GM12878 (cell line): ENCODE measurements at regions of chr2 and their contacts with region 1.

Region 1: DNA sequence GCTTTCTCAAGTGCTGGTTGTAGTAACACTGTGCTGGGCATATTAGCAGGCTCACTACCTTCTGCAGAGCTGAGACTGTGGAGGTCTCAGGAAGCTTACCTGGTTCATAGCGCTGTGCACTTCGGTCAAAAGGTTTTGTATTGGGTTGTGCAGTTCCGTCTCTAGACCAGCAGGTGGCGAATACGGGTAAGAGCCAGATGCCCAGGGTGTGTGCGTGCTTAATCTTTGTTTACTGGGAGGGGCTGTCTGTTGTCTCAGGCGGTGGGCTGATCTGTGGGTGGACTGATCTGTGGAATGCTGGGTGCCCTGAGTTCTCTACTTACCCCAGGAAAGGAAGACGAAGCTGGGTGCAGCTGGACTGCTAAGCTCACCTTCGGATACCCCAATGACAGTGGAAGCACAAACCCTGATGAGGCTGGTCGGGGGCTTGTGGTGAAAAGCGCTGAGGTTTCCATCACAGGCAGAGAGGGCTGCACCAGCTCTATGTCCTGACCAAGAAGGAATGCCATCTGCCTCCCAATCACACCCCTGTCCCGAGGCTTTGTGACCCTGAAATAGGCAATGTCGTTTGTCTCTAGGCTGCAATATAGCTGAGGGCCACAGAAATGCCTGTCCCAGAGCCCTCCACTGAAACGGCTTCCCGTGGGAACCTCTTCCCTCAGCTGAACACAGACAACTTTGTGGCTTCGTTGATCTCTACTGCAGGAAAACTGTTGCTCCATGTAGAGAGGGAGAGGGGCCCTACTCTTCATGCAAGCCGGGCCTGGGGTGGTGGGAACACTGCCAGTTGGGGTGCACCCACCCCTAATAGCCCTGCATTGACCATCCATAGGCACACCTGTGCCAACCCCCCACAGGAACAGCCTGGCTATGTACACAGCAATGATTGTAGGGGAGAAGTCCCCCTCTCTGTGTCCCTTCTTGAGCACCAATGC is 45.9 kb upstream of the FAM117B start:
- DNase-seq: peak; percentile 35
- ATAC-seq: peak; percentile 99
- H3K4me3 ChIP-seq: no peak overlapping the region
- H3K27ac ChIP-seq: no peak overlapping the region
- H3K4me1 ChIP-seq: peaks cover 3% of the 10 kb centered on the region
- H3K27me3 ChIP-seq: no peaks in the 10 kb centered on the region
- CTCF ChIP-seq: peak; percentile 90 to 92 (median 90)
- EP300 ChIP-seq: peak in 1 of 2 experiments; percentile 29; a peak in 1 of 4 replicates
- POLR2A ChIP-seq: no peak
- RAD21 ChIP-seq: peak; percentile 94

Region 2: GRCh38 chr2:202479090-202479489 is 109.8 kb before region 1 on chr2:
- CTCF ChIA-PET with region 1: no interaction called
- POLR2A ChIA-PET with region 1: no interaction called
- RAD21 ChIA-PET with region 1: no interaction called
- SMC1A ChIA-PET with region 1: no interaction called
- in situ Hi-C with region 1: no loop called
- intact Hi-C with region 1: no loop called
- DNase-seq: no peak
- ATAC-seq: peak; percentile 46; the same call in 2 of the 3 replicates
- H3K4me3 ChIP-seq: no peak overlapping the region
- H3K27ac ChIP-seq: no peak overlapping the region
- H3K4me1 ChIP-seq: no peaks in the 10 kb centered on the region
- H3K27me3 ChIP-seq: no peaks in the 10 kb centered on the region
- CTCF ChIP-seq: no peak
- EP300 ChIP-seq: no peak
- POLR2A ChIP-seq: no peak
- RAD21 ChIP-seq: no peak

Region 3: GRCh38 chr2:202602285-202602684 is 13.4 kb after region 1 on chr2:
- CTCF ChIA-PET with region 1: interaction called, 49 read pairs
- POLR2A ChIA-PET with region 1: interaction called, 4 read pairs
- RAD21 ChIA-PET with region 1: interaction called, 9 read pairs
- SMC1A ChIA-PET with region 1: interaction called, 16 read pairs
- in situ Hi-C with region 1: no loop called
- intact Hi-C with region 1: no loop called
- DNase-seq: no peak
- ATAC-seq: no peak
- H3K4me3 ChIP-seq: no peak overlapping the region
- H3K27ac ChIP-seq: no peak overlapping the region
- H3K4me1 ChIP-seq: peaks cover 9% of the 10 kb centered on the region
- H3K27me3 ChIP-seq: no peaks in the 10 kb centered on the region
- CTCF ChIP-seq: no peak
- EP300 ChIP-seq: no peak
- POLR2A ChIP-seq: no peak
- RAD21 ChIP-seq: no peak

Region 4: DNA sequence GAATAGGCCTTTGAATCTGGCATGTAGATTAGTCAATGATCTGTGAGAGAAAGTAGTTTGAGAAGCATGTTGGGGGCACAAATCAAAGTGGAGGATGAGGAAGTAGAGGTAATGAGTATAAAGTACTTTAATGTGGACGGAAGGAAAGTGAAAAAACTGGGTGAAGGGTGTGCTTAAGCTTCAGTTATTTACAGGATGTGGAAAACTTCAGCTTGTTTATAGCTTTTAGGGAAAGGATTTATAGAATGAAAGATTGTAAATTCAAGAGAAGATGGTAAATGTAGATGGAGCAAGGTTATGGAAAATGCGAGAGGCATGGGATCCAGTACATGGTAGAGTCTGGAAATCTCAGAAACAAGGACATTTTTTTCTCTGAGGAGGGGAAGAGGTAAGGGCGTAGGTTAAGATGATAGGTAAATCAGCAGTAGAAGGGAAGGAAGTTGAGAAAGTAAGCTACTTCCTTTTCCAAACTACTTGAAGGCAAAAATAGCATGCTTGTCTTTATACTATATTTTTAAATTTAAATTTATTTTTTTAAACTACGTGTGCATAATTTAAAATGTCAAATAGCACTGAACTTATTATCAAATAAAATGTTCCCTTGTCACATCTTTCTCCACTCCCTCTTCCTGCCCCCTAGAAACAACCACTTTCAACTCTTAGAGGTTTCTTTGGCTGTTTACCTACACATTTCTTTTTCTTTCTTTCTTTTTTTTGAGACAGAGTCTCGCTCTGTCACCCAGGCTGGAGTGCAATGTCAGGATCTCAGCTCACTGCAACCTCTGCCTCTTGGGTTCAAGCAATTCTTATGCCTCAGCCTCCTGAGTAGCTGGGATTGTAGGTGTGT is 54.3 kb after region 1 on chr2:
- CTCF ChIA-PET with region 1: interaction called, 21 read pairs
- POLR2A ChIA-PET with region 1: no interaction called
- RAD21 ChIA-PET with region 1: interaction called, 9 read pairs
- SMC1A ChIA-PET with region 1: interaction called, 8 read pairs
- in situ Hi-C with region 1: no loop called
- intact Hi-C with region 1: no loop called
- DNase-seq: no peak
- ATAC-seq: peak; percentile 40
- H3K4me3 ChIP-seq: peak overlapping the region; percentile 40; the same call in 1 of the 2 replicates
- H3K27ac ChIP-seq: peak overlapping the region; percentile 67
- H3K4me1 ChIP-seq: peaks cover 14% of the 10 kb centered on the region
- H3K27me3 ChIP-seq: no peaks in the 10 kb centered on the region
- CTCF ChIP-seq: no peak
- EP300 ChIP-seq: no peak
- POLR2A ChIP-seq: no peak
- RAD21 ChIP-seq: no peak

Region 5: GRCh38 chr2:202718614-202719013 is 129.7 kb after region 1 on chr2:
- CTCF ChIA-PET with region 1: interaction called, 20 read pairs
- POLR2A ChIA-PET with region 1: no interaction called
- RAD21 ChIA-PET with region 1: interaction called, 8 read pairs
- SMC1A ChIA-PET with region 1: interaction called, 10 read pairs
- in situ Hi-C with region 1: no loop called
- intact Hi-C with region 1: no loop called
- DNase-seq: no peak
- ATAC-seq: no peak
- H3K4me3 ChIP-seq: no peak overlapping the region
- H3K27ac ChIP-seq: no peak overlapping the region
- H3K4me1 ChIP-seq: no peaks in the 10 kb centered on the region
- H3K27me3 ChIP-seq: no peaks in the 10 kb centered on the region
- CTCF ChIP-seq: no peak
- EP300 ChIP-seq: no peak
- POLR2A ChIP-seq: no peak
- RAD21 ChIP-seq: no peak

Region 6: GRCh38 chr2:202870431-202871299 is 281.8 kb after region 1 on chr2:
- CTCF ChIA-PET with region 1: interaction called, 52 read pairs
- POLR2A ChIA-PET with region 1: no interaction called
- RAD21 ChIA-PET with region 1: interaction called, 41 read pairs
- SMC1A ChIA-PET with region 1: interaction called, 31 read pairs
- in situ Hi-C with region 1: loop called (anchors 5 kb)
- intact Hi-C with region 1: loop called (anchors 1 kb)
- DNase-seq: no peak
- ATAC-seq: peak; percentile 90
- H3K4me3 ChIP-seq: peak overlapping the region; percentile 81
- H3K27ac ChIP-seq: peak overlapping the region; percentile 67
- H3K4me1 ChIP-seq: no peaks in the 10 kb centered on the region
- H3K27me3 ChIP-seq: no peaks in the 10 kb centered on the region
- CTCF ChIP-seq: peak; percentile 71 to 75 (median 75)
- EP300 ChIP-seq: no peak
- POLR2A ChIP-seq: no peak
- RAD21 ChIP-seq: peak; percentile 74

Region 7: DNA sequence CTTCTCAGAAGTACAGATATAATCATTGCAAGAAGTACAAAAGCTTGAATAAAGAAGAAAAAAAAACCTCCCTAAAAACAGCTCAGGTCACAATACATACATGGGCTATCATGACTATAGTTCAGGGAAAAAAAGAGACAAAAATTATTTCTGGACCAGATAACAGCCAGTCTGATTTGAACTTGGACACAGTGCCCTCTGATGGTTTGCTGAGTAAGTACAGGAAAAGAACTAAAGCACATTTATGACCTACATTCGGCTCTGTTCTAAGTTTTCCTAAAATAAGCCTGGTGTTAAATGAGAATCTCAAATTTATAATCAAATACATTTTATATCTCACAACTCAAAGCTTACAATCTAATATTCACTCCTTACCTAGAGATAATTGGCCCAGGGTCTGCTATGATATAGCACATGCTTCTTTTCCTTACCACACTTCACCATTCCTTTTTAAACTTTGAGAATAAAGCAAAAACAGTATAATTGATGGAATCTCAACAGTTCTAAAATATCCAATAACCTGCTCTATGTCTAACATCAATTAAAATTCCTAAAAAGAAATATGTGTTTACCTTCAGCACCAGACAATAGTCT is 865.0 kb after region 1 on chr2:
- CTCF ChIA-PET with region 1: interaction called, 11 read pairs
- POLR2A ChIA-PET with region 1: no interaction called
- RAD21 ChIA-PET with region 1: no interaction called
- SMC1A ChIA-PET with region 1: no interaction called
- in situ Hi-C with region 1: no loop called
- intact Hi-C with region 1: no loop called
- DNase-seq: peak; percentile 4
- ATAC-seq: peak; percentile 86
- H3K4me3 ChIP-seq: no peak overlapping the region
- H3K27ac ChIP-seq: no peak overlapping the region
- H3K4me1 ChIP-seq: no peaks in the 10 kb centered on the region
- H3K27me3 ChIP-seq: no peaks in the 10 kb centered on the region
- CTCF ChIP-seq: peak; percentile 67 to 80 (median 73); a peak in 5 of 6 replicates
- EP300 ChIP-seq: no peak
- POLR2A ChIP-seq: no peak
- RAD21 ChIP-seq: peak; percentile 89